ENCODE measurements at regions of chr1 and their contacts with region 1.

Region 1: DNA sequence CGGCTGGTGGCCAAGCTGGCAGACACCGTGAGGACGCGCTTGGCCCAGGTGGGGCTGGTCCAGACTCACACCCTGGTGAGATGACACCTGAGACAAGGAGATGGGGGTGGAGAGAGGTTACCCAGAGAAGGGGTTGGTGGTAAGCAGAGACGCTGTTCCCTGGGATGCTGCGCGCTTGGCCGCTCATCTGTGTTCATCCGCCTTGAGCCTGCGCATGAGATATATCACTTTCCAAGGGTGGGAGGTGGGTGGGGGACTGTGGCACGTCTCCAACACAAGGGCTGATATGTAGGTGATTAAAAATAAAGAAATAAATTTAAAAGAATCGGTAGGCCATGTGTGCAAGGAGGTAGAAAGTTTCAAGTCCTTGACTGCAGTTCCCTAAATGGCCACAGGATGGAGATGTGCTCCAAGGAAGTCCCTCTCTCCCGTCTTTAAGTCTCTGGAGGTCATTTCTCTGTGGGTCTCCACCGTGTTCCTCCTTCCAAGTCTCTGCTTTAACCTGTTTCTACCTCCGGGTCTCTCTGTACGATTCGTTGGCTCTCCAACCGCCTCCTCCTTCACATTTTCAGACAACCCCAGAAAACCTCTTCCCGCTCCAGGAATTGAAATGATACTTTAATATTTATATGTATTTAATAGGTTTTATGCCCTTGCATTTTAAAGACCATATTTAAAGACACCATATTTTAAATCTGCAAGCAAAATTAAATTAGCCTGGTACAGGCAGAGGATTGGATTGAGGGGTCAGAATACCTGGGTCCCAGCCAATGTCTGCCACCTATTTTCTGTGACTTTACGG is 4.5 kb downstream of the TTC24 start:
- DNase-seq: peak in 7 of 10 donors; percentile 47 to 85 (median 67)
- H3K4me3 ChIP-seq: peak overlapping the region in 1 of 59 donors; percentile 28
- H3K27ac ChIP-seq: no peak overlapping the region
- H3K27me3 ChIP-seq: no peaks in the 10 kb centered on the region
- CTCF ChIP-seq: peak; percentile 87 to 99 (median 96)

Region 2: GRCh38 chr1:156383023-156383422 is 201.0 kb before region 1 on chr1:
- intact Hi-C with region 1: loop called in 1 of 2 experiments (anchors 10 kb)
- DNase-seq: peak; percentile 67 to 86 (median 82)
- H3K4me3 ChIP-seq: no peak overlapping the region
- H3K27ac ChIP-seq: peak overlapping the region in 17 of 59 donors; percentile 4 to 76 (median 24)
- H3K27me3 ChIP-seq: peaks cover 0 to 2% (median 0%) of the 10 kb centered on the region in 45 donors
- CTCF ChIP-seq: peak; percentile 64 to 98 (median 90)

Region 3: DNA sequence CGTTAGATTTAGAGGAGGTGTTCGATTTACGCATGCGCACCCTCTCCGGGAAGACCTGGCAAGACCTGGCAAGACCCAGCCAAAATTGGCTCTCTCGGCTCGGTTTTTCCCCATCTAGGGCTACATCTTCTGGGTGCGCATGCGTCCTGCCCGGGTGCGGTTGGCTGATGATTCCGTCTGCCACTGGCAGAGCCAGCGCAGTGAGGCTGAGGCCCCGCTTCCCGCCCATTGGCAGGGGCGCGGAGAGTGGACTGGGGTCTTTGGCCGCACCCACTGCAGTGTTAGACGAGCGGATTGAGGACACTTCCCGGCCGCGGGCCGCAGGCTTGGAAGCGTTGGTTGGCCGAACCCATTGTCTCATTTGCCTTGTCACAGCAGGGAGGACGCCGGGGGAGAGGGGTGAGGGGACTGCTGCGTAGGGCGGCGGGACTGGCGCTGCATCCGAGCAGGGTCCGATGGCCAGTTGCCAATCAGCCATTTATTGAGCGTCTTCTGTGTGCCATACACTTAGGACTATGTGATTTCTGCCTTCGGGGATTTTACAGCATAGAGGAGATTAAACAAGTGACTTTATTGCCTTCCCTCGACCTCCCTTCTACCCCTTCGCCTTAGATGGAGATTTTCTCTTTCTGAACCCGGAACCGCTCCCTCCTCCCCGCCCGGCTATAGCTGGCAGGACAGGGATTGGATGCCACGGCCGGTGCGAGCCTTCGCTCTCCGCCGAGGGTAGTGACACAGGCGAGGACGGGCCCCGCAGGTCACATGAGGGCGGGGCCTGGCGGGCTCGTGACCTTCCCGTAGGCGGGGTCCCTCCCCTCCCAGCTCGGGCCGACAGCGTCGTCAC is 127.2 kb before region 1 on chr1:
- intact Hi-C with region 1: loop called in 1 of 2 experiments (anchors 5 kb)
- DNase-seq: peak; percentile 89 to 98 (median 96)
- H3K4me3 ChIP-seq: peak overlapping the region; percentile 50 to 96 (median 72)
- H3K27ac ChIP-seq: peak overlapping the region; percentile 91 to 100 (median 100)
- H3K27me3 ChIP-seq: no peaks in the 10 kb centered on the region
- CTCF ChIP-seq: peak in 18 of 56 donors; percentile 1 to 50 (median 7)

Region 4: DNA sequence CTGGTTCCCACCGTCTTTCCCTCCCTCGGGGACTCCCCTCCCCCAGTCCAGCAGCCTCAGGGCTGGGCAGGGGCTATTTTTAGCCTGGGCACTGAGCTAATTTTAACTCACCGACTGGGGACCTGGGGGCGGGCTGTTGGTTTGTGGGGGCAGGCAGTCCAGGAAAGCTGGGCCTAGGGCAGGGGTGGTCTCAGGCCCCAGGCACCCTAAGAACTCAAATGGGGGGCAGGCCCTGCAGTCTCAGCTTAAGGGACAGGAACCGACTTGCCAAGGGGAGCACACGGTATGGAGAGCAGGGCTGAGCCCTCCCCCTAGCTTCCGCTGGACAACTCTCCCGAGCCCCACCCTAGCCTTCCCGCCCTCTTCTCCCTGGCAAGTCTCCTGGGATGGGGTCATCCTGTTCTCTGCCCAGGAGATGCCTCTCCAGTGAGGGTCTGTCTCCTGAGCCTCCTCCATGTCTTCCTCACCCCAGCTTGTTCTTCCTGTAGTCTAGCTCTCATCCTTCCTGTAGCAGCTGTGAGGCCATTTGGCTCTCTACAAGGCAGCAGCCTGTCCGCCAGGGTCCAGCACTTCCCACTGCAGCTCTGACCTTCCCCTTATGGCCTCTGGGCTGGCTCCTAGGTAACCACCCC is 93.5 kb before region 1 on chr1:
- intact Hi-C with region 1: loop called in 1 of 2 experiments (anchors 5 kb)
- DNase-seq: peak in 1 of 10 donors; percentile 62
- H3K4me3 ChIP-seq: peak overlapping the region in 43 of 59 donors; percentile 1 to 49 (median 27)
- H3K27ac ChIP-seq: peak overlapping the region; percentile 51 to 100 (median 99)
- H3K27me3 ChIP-seq: no peaks in the 10 kb centered on the region
- CTCF ChIP-seq: peak in 6 of 56 donors; percentile 6 to 17 (median 10)

Region 5: GRCh38 chr1:156500797-156501499 is 83.1 kb before region 1 on chr1:
- intact Hi-C with region 1: loop called in 1 of 2 experiments (anchors 5 kb)
- DNase-seq: peak; percentile 87 to 97 (median 94)
- H3K4me3 ChIP-seq: peak overlapping the region; percentile 75 to 100 (median 98)
- H3K27ac ChIP-seq: peak overlapping the region; percentile 97 to 100 (median 100)
- H3K27me3 ChIP-seq: no peaks in the 10 kb centered on the region
- CTCF ChIP-seq: peak in 54 of 56 donors; percentile 29 to 77 (median 58)

Region 6: DNA sequence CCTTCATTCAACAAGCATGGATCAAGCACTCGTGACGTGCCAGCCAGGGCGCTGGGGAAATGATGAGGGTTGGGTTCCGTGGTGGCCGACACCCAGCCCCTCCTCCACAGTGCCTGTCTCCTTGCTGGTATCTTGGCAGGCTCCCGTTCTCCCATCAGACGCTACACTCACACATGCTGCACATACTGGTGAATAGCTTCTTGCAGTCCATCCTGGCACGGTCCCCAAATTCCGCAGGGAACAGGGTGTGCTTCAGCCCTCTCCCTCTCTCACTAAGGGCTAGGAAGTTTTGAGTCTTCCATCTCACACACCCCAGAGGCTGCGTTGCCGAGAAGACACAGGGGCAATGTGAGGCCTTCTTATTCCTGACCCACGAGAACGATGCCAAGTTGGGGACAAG is 73.3 kb before region 1 on chr1:
- intact Hi-C with region 1: loop called (anchors 5 kb)
- DNase-seq: peak; percentile 72 to 93 (median 86)
- H3K4me3 ChIP-seq: peak overlapping the region in 42 of 59 donors; percentile 3 to 52 (median 22)
- H3K27ac ChIP-seq: peak overlapping the region; percentile 29 to 93 (median 87)
- H3K27me3 ChIP-seq: no peaks in the 10 kb centered on the region
- CTCF ChIP-seq: peak in 1 of 56 donors; percentile 15

Region 7: DNA sequence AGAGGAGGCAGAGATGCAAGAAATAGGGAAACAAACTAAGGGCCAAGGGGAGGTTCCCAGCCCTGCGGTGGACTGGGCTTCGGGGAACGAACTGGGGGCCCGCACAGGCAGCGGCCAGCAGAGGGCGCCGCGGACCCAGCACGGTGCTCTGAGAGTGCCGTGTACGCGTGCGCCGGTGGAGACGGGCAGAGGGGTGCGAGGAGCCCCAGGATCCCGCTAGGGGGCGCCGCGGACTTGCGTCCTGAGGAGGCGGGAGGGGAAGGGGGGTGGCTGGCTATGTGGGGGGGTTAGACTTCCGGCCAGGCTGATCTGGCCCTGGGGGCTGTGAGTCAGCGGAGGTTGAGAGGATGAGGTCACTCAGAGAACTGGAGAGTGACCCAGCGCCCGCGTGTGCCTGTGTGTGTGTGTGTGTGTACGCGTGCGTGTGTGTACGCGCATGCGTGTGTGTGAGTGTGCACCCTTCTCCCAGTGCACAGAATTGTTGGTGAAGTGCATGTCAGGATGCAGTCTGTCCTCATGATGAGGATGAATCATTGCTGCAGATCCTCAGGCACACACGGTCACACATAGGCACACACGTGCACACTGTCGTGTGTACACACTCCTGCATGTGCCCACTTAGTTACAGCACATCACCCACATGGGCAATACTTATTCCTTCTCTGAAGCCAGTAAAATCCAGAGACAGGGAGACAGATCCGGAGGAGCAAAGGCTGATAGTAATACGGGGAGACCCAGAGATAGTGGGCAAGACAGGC is 76.2 kb after region 1 on chr1:
- intact Hi-C with region 1: loop called in 1 of 2 experiments (anchors 1 kb)
- DNase-seq: peak; percentile 87 to 94 (median 92)
- H3K4me3 ChIP-seq: peak overlapping the region in 53 of 59 donors; percentile 5 to 64 (median 39)
- H3K27ac ChIP-seq: peak overlapping the region; percentile 65 to 97 (median 91)
- H3K27me3 ChIP-seq: peaks cover 0 to 2% (median 0%) of the 10 kb centered on the region in 45 donors
- CTCF ChIP-seq: peak; percentile 92 to 100 (median 99)

Measured in dorsolateral prefrontal cortex (tissue), 120 donors.